ENCODE measurements at regions of chr18 and their contacts with region 1.

Region 1: GRCh38 chr18:58699551-58699950 is 28.3 kb downstream of the MALT1 start:
- DNase-seq: no peak
- ATAC-seq: no peak
- H3K4me3 Mint-ChIP-seq: no peak overlapping the region
- H3K27ac Mint-ChIP-seq: no peak overlapping the region
- H3K4me1 Mint-ChIP-seq: peaks cover 49% of the 10 kb centered on the region
- H3K27me3 Mint-ChIP-seq: no peaks in the 10 kb centered on the region
- CTCF ChIP-seq: no peak

Region 2: DNA sequence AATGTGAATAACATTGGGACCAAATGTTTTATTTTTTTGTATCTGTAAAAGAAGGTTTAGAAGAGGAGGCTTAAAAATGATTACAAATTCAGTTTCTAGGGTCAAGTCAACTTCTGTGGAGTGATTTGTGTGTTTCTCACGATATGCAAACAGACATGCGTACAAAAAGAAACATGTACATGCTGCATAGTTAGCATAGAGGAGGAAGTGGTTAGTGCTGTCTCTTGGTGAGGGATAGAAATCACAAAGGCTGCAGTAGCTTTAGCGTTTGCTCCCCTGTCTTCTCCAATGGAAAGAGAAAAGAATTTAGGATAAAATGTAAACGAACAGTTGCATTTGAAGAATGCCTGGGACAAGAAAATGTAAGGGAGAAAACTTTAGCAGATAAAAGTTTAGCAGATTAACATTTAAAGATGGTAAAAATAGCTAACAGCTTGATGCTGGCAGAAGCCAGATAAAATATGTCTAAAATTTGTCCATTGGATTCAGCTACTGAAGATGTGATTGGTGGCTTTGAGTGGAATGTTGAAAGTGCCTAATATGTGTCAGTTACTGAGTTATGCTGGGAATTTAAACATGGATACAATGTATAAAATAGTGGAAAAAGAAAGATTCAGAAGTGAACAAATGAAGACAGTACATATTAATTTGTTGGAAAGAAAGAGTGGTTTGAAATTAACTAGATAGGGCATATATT is 16.7 kb after region 1 on chr18:
- CTCF ChIA-PET with region 1: interaction called, 29 read pairs
- POLR2A ChIA-PET with region 1: interaction called, 4 read pairs
- intact Hi-C with region 1: no loop called
- DNase-seq: no peak
- ATAC-seq: peak; percentile 69
- H3K4me3 Mint-ChIP-seq: peak overlapping the region; percentile 31
- H3K27ac Mint-ChIP-seq: peak overlapping the region; percentile 91
- H3K4me1 Mint-ChIP-seq: peaks cover 60% of the 10 kb centered on the region
- H3K27me3 Mint-ChIP-seq: no peaks in the 10 kb centered on the region
- CTCF ChIP-seq: no peak

Measured in activated CD8-positive, alpha-beta T cell treated with anti-CD3 and anti-CD28 coated beads for 36 hours (primary cell).